Activated T-helper 1 cell treated with anti-CD3 and anti-CD28 coated beads, Interleukin-12 subunit alpha, Interleukin-12 subunit beta, Interleukin-2, Interleukin-4 antibody, amounts not matched to agents 30 ng/mL and 10 ng/mL and 1 ng/mL, durations not matched to agents 14 hours and 24 hours and 36 hours (primary cell): ENCODE measurements at regions of chr18 and their contacts with region 1.

Region 1: GRCh38 chr18:12376718-12377555 is at the start of gene AFG3L2:
- DNase-seq: peak; percentile 100
- H3K4me3 Mint-ChIP-seq: peak within 1 kb of the TSS; percentile 92
- H3K27ac Mint-ChIP-seq: peak within 1 kb of the TSS; percentile 92
- H3K4me1 Mint-ChIP-seq: peaks cover 36% of the 10 kb centered on the region
- H3K27me3 Mint-ChIP-seq: peaks cover 18% of the 10 kb centered on the region
- total RNA-seq, gene AFG3L2: 66.8 and 70.6 TPM in 2 replicates

Region 2: DNA sequence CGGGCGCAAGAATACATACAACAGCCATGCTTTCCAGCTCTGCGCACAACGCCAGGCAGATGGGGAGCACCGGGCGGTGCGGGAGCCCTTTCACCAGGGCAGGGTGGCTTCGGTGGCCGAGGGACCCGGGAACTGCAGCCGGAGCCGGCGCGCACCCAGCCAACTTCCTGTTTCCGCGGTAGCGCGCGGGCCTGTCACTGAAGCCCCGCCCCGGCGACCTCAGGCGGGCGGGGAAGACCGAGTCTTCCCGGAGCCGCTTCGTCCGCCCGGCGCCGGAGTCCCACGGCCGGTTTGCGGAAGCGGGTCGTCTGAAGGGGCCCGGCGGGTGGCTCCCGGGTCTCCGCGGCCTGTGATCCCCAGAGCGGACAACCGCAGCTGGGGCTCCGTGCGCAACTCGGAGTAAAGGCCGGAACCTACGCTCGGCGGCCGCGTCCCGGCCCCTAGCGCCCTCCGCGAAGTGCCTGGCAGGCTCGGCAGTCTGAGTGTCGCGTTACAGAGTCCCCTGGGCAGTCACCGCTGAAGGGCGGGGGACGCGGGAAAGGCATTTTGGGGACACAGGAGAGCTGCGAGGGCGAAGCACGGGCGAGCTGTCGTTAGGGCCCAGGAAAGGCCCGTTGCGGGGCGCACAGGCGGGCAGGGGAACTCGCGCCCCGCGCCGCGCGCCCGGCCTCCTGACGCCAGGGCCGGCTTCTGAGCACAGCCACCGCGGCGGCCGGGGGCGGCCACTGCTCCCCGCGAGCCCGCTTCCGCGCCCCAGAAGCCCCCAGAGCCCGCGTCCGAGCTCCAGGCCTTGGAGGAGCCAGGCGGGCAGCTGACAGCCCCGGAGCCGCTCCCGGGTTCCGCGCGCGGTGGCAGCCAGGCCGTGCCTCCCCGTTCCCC is 468.5 kb before region 1 on chr18 and contains the start of gene MPPE1:
- intact Hi-C with region 1: loop called (anchors 5 kb)
- DNase-seq: peak; percentile 87
- H3K4me3 Mint-ChIP-seq: peak within 1 kb of the TSS; percentile 94
- H3K27ac Mint-ChIP-seq: peak within 1 kb of the TSS; percentile 93
- H3K4me1 Mint-ChIP-seq: peaks cover 32% of the 10 kb centered on the region
- H3K27me3 Mint-ChIP-seq: no peaks in the 10 kb centered on the region
- total RNA-seq, gene MPPE1: 45.8 and 47.4 TPM in 2 replicates

Region 3: DNA sequence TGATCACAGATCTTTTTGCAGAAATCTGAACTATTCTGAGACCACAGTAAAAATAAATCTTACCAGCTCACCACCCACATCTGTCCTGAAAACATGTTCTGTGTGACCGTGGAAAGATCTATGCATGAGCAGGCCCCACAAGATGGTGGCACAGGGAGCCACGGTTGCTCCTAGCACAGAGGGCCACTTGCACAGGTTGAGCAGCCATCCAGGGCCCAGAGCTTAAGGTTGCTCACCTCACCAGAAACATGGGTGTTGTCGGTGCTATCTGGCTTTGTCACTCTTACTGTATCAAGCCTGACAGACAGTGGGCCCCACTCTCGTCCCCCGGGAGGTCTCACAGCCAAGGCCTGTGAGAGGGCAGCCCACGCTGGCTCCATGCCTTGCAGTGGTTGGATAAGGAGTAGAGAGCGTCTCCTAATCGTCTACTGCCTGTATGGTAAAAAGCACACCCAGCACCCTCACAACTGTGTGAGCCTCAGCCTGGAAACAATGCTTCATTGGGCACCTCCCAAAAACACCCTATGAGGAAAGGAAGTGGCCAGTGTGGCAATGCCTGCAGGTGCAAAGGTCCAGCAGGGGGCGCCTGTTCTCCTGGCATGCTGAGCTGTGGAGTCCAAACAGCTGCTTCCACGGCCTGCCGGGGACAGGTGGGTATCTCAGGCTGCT is 49.3 kb before region 1 on chr18:
- intact Hi-C with region 1: loop called (anchors 2 kb)
- DNase-seq: peak; percentile 62
- H3K4me3 Mint-ChIP-seq: no peak overlapping the region
- H3K27ac Mint-ChIP-seq: peak overlapping the region; percentile 27
- H3K4me1 Mint-ChIP-seq: peaks cover 15% of the 10 kb centered on the region
- H3K27me3 Mint-ChIP-seq: no peaks in the 10 kb centered on the region

Region 4: DNA sequence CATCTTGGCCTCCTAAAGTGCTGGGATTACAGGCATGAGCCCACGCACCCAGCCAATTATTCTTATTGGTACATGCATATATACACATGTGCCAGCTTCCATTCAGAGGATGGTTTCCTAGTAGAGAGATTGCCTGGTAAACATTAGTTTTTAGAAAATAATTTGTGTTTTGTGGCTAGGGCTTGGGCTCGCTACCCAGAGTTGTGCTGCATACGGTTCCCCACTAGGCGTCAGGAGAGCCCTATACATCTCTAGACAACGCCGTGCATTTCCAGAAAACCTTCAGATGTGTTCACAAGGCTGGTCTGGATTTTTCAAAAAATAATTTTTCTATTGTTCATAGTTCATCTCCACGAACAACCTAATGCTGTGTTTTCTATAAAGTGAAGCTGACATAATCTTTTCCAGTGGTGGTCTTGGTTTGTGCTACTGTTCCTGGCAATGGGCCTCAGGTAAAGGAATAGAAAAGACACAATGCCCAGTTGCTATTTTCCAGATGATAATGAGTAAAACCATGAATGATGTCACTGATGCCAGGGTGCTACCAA is 14.8 kb after region 1 on chr18:
- intact Hi-C with region 1: no loop called
- DNase-seq: peak; percentile 26
- H3K4me3 Mint-ChIP-seq: no peak overlapping the region
- H3K27ac Mint-ChIP-seq: no peak overlapping the region
- H3K4me1 Mint-ChIP-seq: peaks cover 5% of the 10 kb centered on the region
- H3K27me3 Mint-ChIP-seq: peaks cover 4% of the 10 kb centered on the region

Region 5: DNA sequence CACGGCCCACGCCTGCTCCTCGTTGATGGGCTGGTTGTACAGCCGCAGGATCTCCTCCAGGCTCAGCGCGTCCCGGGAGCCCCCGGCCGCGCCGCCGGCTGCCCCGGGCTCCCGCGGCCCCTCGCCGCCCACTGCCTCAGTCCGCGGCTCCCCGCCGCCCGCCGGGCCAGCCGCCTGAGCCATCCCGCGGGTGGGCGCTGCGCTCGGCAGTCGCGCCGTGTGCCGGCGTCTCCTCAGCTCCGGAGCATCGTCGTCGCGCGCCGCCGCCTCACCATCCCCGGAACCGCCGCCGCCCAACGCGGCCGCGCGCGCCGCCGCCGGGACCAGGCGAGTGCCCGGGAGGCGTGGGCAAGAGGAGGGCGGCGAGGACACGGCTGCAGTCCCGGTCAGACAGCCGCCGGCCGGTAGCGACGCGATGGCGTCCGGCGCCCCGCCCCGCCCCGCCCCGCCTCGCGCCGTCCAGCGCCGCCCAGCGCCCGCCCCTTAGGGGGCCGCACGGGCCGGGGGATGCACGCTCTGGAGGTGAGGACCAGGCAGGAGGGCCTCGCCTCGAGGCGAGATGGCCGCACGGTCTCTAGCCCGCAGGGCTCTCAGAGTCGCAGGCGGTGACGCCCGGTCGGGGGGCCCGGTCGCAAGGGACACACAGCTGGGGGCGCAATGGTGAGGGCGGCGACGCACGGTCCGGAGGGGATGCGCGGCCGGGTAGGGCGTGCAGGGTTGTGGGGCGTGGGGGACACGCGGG is 280.9 kb after region 1 on chr18 and contains the start of gene SPIRE1:
- intact Hi-C with region 1: loop called (anchors 1 kb)
- DNase-seq: peak; percentile 38
- H3K4me3 Mint-ChIP-seq: peak within 1 kb of the TSS; percentile 84
- H3K27ac Mint-ChIP-seq: peak within 1 kb of the TSS; percentile 47
- H3K4me1 Mint-ChIP-seq: peaks cover 35% of the 10 kb centered on the region
- H3K27me3 Mint-ChIP-seq: peaks cover 27% of the 10 kb centered on the region
- total RNA-seq, gene SPIRE1: 8.8 and 10.9 TPM in 2 replicates

Region 6: DNA sequence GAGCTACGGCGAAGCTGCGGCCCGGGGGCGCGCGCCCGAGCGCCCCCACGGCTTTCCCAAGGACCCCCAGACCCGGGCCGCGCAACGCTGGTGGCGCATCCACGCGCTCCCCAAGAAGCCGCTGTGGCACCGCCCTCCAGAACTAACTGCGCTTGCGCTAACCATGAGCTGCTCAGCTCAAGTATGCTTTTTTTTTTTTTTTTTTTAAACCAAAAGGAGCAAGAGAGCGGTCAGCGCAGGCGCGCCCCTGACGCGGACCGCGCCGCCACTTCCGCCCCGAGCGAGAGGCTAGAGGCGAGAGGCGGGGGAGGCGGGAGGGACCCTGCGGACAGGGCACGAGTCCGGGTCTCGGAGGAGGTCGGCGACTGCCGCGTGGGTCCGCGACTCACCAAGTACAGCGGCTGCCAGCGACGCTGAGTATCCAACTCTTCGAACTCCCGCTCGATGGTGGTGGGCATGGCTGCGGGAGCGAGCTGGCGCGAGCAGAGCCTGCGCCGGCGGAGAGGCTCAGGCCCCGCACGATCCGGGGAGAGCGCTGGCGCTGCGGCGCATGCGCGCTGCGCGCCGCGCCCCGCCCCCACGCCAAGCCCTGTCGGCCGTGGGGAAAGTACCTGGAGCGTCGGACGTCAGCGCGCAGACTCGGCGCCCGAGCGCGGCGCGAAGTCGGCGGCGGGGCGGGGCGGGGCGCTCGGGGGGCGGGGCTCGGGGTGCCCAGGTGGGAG is 506.9 kb after region 1 on chr18 and contains the start of gene PTPN2:
- intact Hi-C with region 1: loop called (anchors 5 kb)
- DNase-seq: peak; percentile 89
- H3K4me3 Mint-ChIP-seq: peak within 1 kb of the TSS; percentile 92
- H3K27ac Mint-ChIP-seq: peak within 1 kb of the TSS; percentile 92
- H3K4me1 Mint-ChIP-seq: peaks cover 70% of the 10 kb centered on the region
- H3K27me3 Mint-ChIP-seq: no peaks in the 10 kb centered on the region
- total RNA-seq, gene PTPN2: 76.7 and 77.1 TPM in 2 replicates

Region 7: DNA sequence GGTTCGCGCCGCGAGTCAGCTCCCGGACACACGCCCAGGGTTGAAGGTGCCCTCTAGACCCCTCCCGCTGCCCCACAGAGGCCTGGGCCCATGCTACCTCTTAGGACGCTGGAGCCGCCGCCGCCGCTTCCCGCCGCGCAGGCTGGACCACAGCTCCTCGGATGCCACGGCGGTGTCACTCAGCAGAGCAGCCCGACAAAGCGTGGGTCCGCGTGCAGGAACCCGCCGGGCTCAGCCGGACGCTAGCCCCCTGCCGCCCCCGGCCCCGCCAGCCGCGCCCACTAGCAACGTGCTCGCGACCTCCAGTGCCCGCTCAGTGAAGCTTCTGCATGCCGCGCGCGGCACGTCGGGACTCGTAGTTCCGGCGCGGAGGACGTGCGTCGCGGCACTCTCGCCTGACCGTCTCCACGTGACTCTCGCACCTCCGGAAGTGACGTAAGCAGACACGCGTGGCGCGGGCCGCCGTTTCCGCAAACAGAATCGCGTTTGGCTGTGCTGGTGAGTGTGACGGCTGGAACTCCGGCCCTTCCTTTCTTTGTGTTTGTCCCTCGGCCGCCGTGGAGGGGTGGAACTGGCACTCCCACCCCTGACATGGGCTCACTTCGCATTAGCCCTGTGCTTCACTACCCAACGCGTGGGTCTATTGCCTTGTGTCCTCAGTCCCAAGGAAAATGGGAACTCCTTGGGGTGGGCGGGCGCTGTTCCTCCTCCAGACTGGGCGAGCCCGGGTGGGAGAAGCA is 1349.5 kb after region 1 on chr18 and contains the starts of genes FAM210A and RNMT:
- intact Hi-C with region 1: loop called (anchors 2 kb)
- DNase-seq: peak; percentile 94
- H3K4me3 Mint-ChIP-seq: peak within 1 kb of the TSS; percentile 93
- H3K27ac Mint-ChIP-seq: peak within 1 kb of the TSS; percentile 86
- H3K4me1 Mint-ChIP-seq: peaks cover 72% of the 10 kb centered on the region
- H3K27me3 Mint-ChIP-seq: no peaks in the 10 kb centered on the region
- total RNA-seq, gene FAM210A: 27.7 and 29.5 TPM in 2 replicates
- total RNA-seq, gene RNMT: 55.8 and 60.6 TPM in 2 replicates